ENCODE measurements at regions of chr11 and their contacts with region 1.

Region 1: DNA sequence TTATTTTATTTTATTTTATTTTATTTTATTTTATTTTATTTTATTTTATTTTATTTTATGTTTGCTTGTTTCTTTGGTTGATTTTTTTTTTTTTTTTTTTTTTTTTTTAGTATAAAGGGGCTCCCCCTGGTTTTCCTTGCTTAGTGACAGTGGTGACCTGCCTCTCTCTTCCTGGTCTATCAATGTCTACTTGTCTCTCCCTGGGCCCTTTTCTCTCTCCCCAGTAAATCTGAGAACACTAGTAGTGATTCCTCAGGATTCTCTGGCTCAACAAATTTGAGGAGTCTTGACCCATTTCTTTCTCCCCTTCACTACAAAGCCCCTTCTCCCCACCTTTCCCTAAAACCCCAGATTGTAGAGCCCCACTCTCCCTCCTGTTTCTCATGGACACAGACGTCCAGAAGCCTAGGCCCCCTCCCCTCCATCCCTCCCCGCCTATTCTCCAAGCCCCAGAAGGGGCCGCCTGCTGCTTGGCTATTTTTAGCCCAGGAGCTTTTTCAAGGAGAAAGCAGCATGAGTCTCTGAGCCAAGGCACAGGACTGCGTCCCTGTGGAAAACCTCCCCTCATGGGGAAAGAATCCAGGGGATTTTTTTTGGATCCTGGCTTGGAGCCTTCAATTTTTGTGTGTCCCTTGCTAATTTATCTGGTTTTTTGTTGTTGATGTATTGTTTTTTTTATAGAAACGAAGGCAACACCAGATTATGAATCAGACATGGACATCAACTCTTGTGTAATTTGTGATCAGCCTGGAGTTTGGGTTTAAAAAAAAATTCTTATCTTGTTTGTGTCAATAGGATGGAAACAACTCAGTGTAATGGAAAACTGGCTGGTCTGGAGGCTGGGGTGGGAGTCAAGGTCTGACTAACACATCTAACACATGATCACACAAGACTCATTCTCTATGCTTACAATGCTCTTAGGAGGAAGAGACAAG is 17.5 kb upstream of the ACCSL start:
- DNase-seq: no peak

Region 2: GRCh38 chr11:43944761-43945311 is 85.4 kb before region 1 on chr11:
- intact Hi-C with region 1: loop called in 1 of 2 experiments (anchors 5 kb)
- DNase-seq: peak; percentile 94

Region 3: GRCh38 chr11:43987384-43988039 is 42.7 kb before region 1 on chr11:
- intact Hi-C with region 1: loop called in 1 of 2 experiments (anchors 5 kb)
- DNase-seq: peak; percentile 98

Measured in posterior vena cava (tissue), 2 donors.